H1 (cell line): ENCODE measurements at regions of chr19 and their contacts with region 1.

Region 1: GRCh38 chr19:40762754-40763470 is 11.9 kb downstream of the SNRPA start:
- DNase-seq: no peak
- H3K4me3 ChIP-seq: no peak overlapping the region
- H3K27ac ChIP-seq: no peak overlapping the region
- H3K4me1 ChIP-seq: no peaks in the 10 kb centered on the region
- H3K27me3 ChIP-seq: no peaks in the 10 kb centered on the region
- CTCF ChIP-seq: no peak
- EP300 ChIP-seq: no peak
- POLR2A ChIP-seq: no peak
- RAD21 ChIP-seq: no peak

Region 2: DNA sequence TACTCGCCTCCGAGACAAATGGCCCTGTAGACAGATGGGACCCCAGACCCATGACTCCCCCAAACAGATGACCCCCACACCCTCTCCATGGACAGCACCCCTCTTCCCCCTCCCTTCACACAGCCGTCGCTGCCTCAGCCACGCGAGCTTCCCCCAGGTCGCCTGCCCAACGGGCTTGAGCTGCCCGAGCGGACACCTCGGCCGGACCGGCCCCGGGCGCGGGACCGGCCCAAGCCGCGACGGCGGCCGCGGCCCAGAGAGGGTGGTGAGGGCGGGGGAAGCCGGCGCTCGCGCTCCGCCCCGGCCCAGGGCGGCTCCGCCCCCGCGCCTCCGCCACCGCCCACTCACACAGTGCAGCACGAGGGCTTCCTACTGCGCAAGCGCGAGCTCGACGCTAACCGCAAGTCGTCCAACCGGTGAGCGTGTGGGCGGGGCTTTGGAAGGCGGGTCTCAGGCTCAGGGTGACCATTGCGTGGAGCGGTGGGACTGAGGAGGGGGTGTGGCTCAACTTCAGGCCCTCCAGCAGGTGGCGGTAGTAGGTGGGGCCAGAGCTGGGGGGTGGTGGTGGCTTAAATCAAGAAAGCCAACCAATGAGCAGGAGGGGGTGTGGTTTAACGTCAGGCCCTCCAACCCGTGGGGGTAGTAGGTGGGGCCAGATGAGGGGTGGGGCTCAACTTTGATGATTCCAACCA is 192.5 kb before region 1 on chr19:
- CTCF ChIA-PET with region 1: no interaction called
- POLR2A ChIA-PET with region 1: no interaction called
- DNase-seq: peak; percentile 99 to 100
- H3K4me3 ChIP-seq: peak overlapping the region; percentile 42 to 74 (median 45)
- H3K27ac ChIP-seq: no peak overlapping the region
- H3K4me1 ChIP-seq: peaks cover 2 to 13% (median 4%) of the 10 kb centered on the region in 4 experiments
- H3K27me3 ChIP-seq: peaks cover 32 to 49% (median 46%) of the 10 kb centered on the region in 4 experiments
- CTCF ChIP-seq: peak; percentile 42 to 62 (median 58)
- EP300 ChIP-seq: no peak
- POLR2A ChIP-seq: no peak
- RAD21 ChIP-seq: peak; percentile 17 to 36; a peak in 2 of 4 replicates

Region 3: DNA sequence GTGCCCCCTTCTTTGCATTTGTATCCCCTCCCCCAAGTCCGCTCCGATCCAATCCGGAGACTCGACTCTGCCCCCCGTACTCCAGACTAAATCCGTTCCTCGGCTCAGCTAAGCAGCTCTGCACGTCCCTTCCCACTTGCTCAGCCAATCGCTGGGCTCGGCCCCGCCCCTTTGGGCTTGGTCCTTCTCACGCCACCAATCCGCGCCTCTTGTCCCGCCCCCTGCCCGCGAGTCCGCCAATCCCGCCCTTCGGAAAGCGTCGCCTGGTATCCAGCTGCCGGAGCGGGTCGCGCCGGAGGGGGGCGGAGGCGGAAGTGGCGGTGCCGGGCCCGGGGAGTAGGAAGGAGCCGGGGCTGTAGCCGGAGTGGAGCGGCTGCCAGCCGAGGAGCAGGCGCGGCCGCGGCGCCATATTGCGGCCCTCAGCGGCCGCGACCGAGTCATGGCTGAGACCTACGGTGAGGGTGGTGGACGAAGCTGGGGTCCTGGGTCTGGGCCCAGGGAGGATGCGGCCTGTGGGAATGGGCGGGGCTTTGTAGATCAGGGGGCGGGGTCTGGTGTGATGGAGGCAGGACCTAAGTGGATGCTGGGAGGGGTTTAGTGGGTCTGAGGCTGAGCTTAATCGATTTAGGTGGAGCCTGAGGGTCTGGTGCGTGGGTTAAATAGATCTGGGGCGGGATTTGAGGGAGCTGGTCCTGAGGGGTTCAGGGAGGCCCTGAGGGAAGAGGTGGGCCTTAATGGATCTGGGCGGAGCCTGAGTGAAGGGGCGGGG is 15.2 kb after region 1 on chr19 and contains the start of gene RAB4B:
- CTCF ChIA-PET with region 1: interaction called, 4 read pairs
- POLR2A ChIA-PET with region 1: interaction called, 399 read pairs
- DNase-seq: peak; percentile 100
- H3K4me3 ChIP-seq: peak within 1 kb of the TSS; percentile 79 to 90 (median 86)
- H3K27ac ChIP-seq: peak within 1 kb of the TSS; percentile 99
- H3K4me1 ChIP-seq: peaks cover 0 to 14% (median 6%) of the 10 kb centered on the region in 4 experiments; a peak in 6 of 7 replicates
- H3K27me3 ChIP-seq: no peaks in the 10 kb centered on the region
- CTCF ChIP-seq: no peak
- EP300 ChIP-seq: no peak
- POLR2A ChIP-seq: no peak
- RAD21 ChIP-seq: no peak
- total RNA-seq, gene RAB4B: 15.8 and 15.9 TPM in 2 replicates

Region 4: DNA sequence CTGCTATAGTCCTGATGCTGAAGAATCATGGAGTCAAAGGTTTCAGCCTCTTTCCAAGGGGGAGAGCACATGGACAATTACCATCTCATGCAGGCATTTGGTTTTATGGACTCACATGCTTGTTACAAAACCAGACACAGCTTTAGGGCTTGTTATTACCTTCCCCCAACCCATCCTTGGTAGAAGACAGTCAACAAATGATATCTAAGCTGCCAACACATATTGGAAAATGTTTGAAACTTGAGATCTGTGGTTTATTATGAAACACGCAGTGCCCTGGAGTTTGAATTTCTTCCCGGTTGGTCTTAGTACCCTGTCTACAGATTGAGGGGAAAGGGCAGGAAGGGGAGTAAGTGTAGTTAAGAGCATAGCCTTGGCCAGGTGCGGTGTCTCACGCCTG is 99.9 kb after region 1 on chr19:
- CTCF ChIA-PET with region 1: no interaction called
- POLR2A ChIA-PET with region 1: no interaction called
- DNase-seq: no peak
- H3K4me3 ChIP-seq: no peak overlapping the region
- H3K27ac ChIP-seq: no peak overlapping the region
- H3K4me1 ChIP-seq: no peaks in the 10 kb centered on the region
- H3K27me3 ChIP-seq: no peaks in the 10 kb centered on the region
- CTCF ChIP-seq: no peak
- EP300 ChIP-seq: no peak
- POLR2A ChIP-seq: no peak
- RAD21 ChIP-seq: no peak